Activated B cell treated with CpG ODN at 0.5 μM for 24 hours (primary cell): ENCODE measurements at regions of chr10 and their contacts with region 1.

Region 1: GRCh38 chr10:95445837-95446486 is 115.2 kb downstream of the SORBS1 start:
- DNase-seq: no peak
- ATAC-seq: peak; percentile 72
- H3K4me3 Mint-ChIP-seq: no peak overlapping the region
- H3K27ac Mint-ChIP-seq: no peak overlapping the region
- H3K4me1 Mint-ChIP-seq: no peaks in the 10 kb centered on the region
- H3K27me3 Mint-ChIP-seq: peaks cover 10% of the 10 kb centered on the region
- CTCF ChIP-seq: no peak

Region 2: DNA sequence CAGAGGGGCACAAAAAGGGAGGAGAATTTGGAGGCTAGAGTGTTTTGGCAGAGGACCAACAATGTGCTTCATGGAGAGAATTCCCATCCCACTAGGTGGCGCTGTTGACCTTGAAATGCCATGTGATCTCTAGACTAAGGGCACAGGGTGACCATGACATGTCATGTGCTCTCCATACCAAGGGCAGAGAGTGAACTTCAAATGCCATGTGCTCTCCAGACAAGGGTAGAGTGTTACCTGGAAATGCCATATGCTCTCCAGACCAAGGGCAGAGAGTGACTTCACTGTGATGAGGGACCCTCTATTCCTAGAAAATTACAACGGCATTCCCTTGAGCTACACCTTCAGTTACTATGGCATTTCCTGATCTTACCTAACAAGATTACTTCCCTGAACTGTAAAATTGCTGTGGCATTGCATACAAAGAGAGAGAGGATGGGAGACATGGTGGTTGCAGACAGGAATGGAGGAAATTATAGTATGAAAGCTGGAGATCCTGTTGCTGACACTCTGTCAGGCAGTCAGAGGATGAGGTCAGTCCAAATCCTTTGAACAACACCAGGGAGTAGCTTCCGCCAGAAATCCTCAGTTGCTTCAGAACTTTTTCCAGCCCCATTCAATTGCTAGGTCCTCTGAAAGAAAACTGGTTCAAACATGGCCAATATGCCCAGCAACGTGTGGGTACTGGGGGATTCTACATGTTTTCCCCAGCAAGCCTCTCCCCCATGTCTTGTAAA is 312.8 kb before region 1 on chr10:
- CTCF ChIA-PET with region 1: interaction called, 4 read pairs
- POLR2A ChIA-PET with region 1: no interaction called
- intact Hi-C with region 1: loop called (anchors 1 kb)
- DNase-seq: peak; percentile 43
- ATAC-seq: peak; percentile 65
- H3K4me3 Mint-ChIP-seq: no peak overlapping the region
- H3K27ac Mint-ChIP-seq: no peak overlapping the region
- H3K4me1 Mint-ChIP-seq: no peaks in the 10 kb centered on the region
- H3K27me3 Mint-ChIP-seq: peaks cover 1% of the 10 kb centered on the region
- CTCF ChIP-seq: no peak

Region 3: GRCh38 chr10:95374597-95375209 is 71.3 kb before region 1 on chr10:
- CTCF ChIA-PET with region 1: interaction called, 3 read pairs
- POLR2A ChIA-PET with region 1: no interaction called
- intact Hi-C with region 1: loop called (anchors 1 kb)
- DNase-seq: no peak
- ATAC-seq: peak; percentile 64
- H3K4me3 Mint-ChIP-seq: no peak overlapping the region
- H3K27ac Mint-ChIP-seq: no peak overlapping the region
- H3K4me1 Mint-ChIP-seq: no peaks in the 10 kb centered on the region
- H3K27me3 Mint-ChIP-seq: peaks cover 38% of the 10 kb centered on the region
- CTCF ChIP-seq: no peak

Region 4: GRCh38 chr10:95430231-95430951 is 15.6 kb before region 1 on chr10:
- CTCF ChIA-PET with region 1: interaction called, 10 read pairs
- POLR2A ChIA-PET with region 1: no interaction called
- intact Hi-C with region 1: loop called (anchors 1 kb)
- DNase-seq: peak; percentile 24
- ATAC-seq: peak; percentile 93
- H3K4me3 Mint-ChIP-seq: no peak overlapping the region
- H3K27ac Mint-ChIP-seq: no peak overlapping the region
- H3K4me1 Mint-ChIP-seq: no peaks in the 10 kb centered on the region
- H3K27me3 Mint-ChIP-seq: peaks cover 9% of the 10 kb centered on the region
- CTCF ChIP-seq: no peak

Region 5: DNA sequence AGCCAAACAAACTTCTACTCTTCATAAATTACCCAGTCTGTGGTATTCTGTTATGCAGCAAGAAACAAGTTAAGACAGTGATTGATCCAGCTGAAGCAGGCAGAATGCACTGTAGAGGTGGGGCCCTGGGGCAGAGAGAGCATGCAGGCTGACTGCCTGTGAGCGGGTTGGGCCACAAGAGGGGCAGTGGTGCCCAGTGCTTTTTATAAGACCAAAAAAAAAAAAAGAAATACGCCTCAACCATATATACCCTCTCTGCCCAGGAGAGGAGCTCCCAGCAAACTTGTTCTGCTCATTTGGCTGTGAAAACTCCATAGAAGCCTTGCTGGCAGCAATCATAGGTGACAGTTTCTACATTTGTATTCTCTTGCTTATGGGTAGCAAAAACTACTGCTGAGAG is 10.6 kb after region 1 on chr10:
- CTCF ChIA-PET with region 1: interaction called, 10 read pairs
- POLR2A ChIA-PET with region 1: no interaction called
- intact Hi-C with region 1: no loop called
- DNase-seq: no peak
- ATAC-seq: no peak
- H3K4me3 Mint-ChIP-seq: no peak overlapping the region
- H3K27ac Mint-ChIP-seq: no peak overlapping the region
- H3K4me1 Mint-ChIP-seq: no peaks in the 10 kb centered on the region
- H3K27me3 Mint-ChIP-seq: peaks cover 13% of the 10 kb centered on the region
- CTCF ChIP-seq: no peak